ENCODE measurements at regions of chr6 and their contacts with region 1.

Region 1: GRCh38 chr6:37381579-37381978 is 27.8 kb downstream of the RNF8 start:
- DNase-seq: no peak

Region 2: DNA sequence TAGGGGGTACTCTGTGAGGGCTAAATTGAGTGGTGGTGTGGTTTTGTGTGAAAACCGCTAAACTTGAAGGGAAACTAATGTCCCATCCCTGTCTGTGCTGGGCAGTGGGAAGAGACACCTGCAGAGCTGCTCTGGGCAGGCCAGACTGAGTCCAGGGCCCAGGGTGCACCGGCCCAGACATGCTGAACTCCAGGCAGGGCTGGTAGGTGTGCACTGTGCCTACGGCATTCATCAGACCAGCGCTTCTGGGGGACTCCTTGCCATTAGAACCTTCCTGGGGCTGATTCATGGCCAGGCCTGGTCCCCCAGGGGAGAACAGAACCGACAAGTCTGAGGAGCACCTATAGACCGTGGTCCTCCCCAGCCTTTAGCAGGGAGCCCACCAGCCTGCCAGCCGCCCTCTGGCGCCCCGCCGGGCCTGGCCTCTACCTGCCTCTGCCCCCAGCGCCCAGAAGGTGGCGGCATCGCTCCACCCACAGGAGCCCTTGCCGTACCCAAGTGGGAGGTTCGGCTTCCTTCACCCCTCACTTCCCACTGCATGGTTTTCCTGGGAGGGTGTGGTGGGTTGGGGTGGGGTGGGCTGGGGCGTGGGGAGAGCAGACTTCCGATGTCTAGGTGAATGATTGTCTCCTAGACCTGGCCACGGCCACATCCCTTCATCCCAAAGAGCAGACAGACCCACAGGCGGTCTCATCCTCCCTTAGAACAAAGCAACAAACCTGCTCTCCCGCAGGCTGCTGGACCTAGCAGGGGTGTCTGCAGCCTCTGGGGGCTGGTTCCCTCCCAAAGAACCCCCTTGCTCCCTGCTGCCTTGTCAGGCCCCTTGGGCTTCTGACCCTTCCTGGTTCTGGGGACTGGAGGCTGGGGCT is 102.6 kb after region 1 on chr6:
- intact Hi-C with region 1: loop called (anchors 5 kb)
- DNase-seq: no peak